ENCODE measurements at regions of chr15 and their contacts with region 1.

Region 1: DNA sequence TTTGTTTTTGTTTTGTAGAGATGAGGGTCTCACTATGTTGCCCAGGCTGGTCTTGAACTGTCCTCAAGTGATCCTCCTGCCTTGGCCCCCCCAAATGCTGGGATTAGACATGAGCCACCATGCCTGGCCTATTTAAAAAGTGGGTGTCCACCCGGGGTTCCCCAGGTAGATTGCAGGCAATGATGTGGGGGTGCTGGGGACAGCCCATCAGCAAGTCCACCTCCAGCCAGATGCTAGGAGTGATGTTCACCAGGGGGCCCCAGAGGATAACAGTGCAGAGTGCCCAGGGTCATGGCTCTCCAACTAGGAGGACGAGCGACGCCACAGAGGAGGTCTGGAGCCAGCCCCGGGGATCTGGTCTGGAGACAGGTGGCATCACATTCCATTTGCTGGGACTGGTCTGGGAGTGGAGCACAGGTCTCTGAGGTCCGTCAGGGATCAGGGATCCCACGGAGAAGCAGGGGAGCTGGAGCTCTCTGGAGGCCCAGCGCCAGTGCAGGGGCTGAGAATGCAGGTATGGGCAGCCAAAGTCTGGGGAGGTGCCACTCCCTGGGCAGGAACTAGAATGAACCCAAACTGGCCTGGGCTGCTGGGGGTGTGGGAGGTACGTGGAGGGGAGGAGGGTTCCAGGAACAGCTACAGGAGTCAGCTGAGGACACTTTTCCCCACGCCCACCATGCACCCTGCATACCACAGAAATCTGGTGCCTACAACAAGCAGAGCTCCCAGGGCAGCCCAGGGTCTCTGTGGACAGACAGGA is 51.2 kb upstream of the PCSK6 start:
- DNase-seq: peak in 1 of 2 experiments; percentile 53
- H3K4me3 ChIP-seq: no peak overlapping the region
- H3K27ac ChIP-seq: no peak overlapping the region
- H3K4me1 ChIP-seq: no peaks in the 10 kb centered on the region
- H3K27me3 ChIP-seq: no peaks in the 10 kb centered on the region
- CTCF ChIP-seq: peak; percentile 52

Region 2: GRCh38 chr15:101641166-101641764 is 100.6 kb after region 1 on chr15:
- CTCF ChIA-PET with region 1: interaction called, 10 read pairs
- POLR2A ChIA-PET with region 1: no interaction called
- intact Hi-C with region 1: loop called (anchors 1 kb)
- DNase-seq: peak; percentile 73 to 74
- H3K4me3 ChIP-seq: no peak overlapping the region
- H3K27ac ChIP-seq: no peak overlapping the region
- H3K4me1 ChIP-seq: peaks cover 30% of the 10 kb centered on the region
- H3K27me3 ChIP-seq: no peaks in the 10 kb centered on the region
- CTCF ChIP-seq: peak; percentile 98